ENCODE measurements at regions of chr12 and their contacts with region 1.

Region 1: GRCh38 chr12:95532851-95533250 is 18.4 kb downstream of the USP44 start:
- DNase-seq: no peak
- H3K4me3 ChIP-seq: no peak overlapping the region
- H3K27ac ChIP-seq: no peak overlapping the region
- H3K4me1 ChIP-seq: no peaks in the 10 kb centered on the region
- H3K27me3 ChIP-seq: no peaks in the 10 kb centered on the region
- CTCF ChIP-seq: no peak
- POLR2A ChIP-seq: no peak

Region 2: GRCh38 chr12:95072900-95073697 is 459.8 kb before region 1 on chr12 and contains the start of gene NR2C1:
- CTCF ChIA-PET with region 1: interaction called, 15 read pairs
- POLR2A ChIA-PET with region 1: no interaction called
- dilution Hi-C with region 1: no loop called
- intact Hi-C with region 1: no loop called
- DNase-seq: peak; percentile 91
- H3K4me3 ChIP-seq: peak within 1 kb of the TSS; percentile 72 to 88 (median 87)
- H3K27ac ChIP-seq: peak within 1 kb of the TSS; percentile 79
- H3K4me1 ChIP-seq: peaks cover 4% of the 10 kb centered on the region
- H3K27me3 ChIP-seq: no peaks in the 10 kb centered on the region
- CTCF ChIP-seq: no peak
- POLR2A ChIP-seq: peak; percentile 47
- total RNA-seq, gene NR2C1: 36.3 and 37.7 TPM in 2 replicates

Region 3: DNA sequence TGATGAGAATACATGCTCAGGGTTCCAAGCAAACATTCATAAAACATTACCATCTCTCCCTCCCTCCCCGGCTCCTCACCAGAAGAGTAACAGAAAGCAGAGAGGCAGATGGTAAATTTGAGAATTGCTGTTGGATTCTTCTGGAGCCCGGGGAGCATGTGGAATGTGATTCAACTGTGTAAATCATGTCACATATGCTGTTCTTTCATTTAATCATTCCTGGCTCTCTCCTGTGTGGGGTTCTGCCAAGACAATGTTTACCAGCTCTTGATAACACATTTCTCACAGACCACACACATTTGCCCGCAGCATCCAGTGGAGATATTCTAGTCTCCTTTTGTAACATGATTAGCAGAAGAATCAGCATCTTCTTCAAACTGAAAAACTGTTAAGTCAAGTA is 436.0 kb before region 1 on chr12:
- CTCF ChIA-PET with region 1: no interaction called
- POLR2A ChIA-PET with region 1: no interaction called
- dilution Hi-C with region 1: no loop called
- intact Hi-C with region 1: no loop called
- DNase-seq: no peak
- H3K4me3 ChIP-seq: no peak overlapping the region
- H3K27ac ChIP-seq: no peak overlapping the region
- H3K4me1 ChIP-seq: no peaks in the 10 kb centered on the region
- H3K27me3 ChIP-seq: no peaks in the 10 kb centered on the region
- CTCF ChIP-seq: no peak
- POLR2A ChIP-seq: no peak

Region 4: DNA sequence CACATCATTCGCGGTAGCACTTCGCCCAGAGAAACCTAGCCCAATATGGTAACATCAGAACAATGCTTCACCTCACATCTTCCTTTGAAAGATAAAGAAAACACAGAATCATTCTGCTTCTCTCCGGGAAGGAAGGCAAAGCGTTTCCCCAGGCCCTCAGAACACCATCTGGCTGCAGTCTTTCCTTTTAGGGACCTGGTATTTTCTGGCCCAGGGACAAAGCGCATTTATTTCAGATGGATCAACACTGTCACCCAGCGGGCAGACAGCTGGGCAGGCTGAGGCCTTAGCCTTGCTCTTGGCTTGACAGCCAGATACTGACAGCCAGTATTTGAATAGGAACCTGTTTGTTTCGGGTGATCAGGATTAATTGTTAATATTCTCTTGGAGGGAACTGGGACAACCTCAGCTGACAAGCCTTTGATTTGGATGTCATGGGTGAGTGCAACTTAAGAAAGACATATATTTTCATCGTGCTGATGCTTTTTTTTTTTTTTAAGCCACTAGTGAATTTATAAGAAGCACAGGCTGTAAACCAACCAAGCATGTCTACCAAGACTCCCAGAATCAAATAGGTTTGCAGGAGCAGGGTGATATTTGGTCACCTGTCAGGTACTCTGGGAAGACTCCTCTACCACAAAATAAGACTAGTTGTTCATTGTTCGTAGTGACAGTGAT is 196.3 kb before region 1 on chr12:
- CTCF ChIA-PET with region 1: interaction called, 26 read pairs
- POLR2A ChIA-PET with region 1: no interaction called
- dilution Hi-C with region 1: no loop called
- intact Hi-C with region 1: loop called (anchors 1 kb)
- DNase-seq: peak; percentile 91
- H3K4me3 ChIP-seq: peak overlapping the region in 1 of 3 experiments; percentile 27
- H3K27ac ChIP-seq: peak overlapping the region; percentile 50
- H3K4me1 ChIP-seq: peaks cover 11% of the 10 kb centered on the region
- H3K27me3 ChIP-seq: no peaks in the 10 kb centered on the region
- CTCF ChIP-seq: peak; percentile 93 to 98
- POLR2A ChIP-seq: no peak

Region 5: DNA sequence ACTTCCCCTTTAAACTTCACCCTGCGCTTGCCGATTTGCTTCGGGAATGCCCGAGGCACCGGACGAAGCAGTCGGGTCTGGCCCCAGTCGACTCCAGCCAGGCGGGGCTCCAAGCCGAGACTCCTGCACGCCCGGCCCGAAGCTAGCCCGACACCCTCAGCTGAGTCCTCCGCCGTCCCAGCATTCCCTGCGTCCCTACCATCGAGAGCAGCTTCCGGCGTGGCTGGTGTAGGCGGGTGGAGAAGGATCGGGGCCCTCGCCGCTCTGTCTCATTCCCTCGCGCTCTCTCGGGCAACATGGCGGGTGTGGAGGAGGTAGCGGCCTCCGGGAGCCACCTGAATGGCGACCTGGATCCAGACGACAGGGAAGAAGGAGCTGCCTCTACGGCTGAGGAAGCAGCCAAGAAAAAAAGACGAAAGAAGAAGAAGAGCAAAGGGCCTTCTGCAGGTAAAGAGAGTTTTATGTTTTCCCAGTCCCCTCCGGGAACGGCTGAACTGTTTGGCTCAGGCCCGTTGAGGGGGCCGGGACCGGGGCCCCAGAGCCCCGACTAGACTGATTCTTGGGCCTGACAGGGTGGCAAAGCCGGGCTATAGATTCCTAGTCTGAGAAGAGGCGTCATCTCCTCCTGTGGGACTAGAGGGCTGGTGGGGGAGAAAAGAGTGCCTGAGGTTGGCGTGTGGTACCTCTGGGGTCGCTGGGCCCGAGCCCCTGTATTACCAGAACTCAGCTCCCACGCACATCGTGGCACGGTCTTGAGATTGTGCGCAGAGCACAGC is 58.8 kb before region 1 on chr12 and contains the start of gene METAP2:
- CTCF ChIA-PET with region 1: interaction called, 13 read pairs
- POLR2A ChIA-PET with region 1: no interaction called
- dilution Hi-C with region 1: no loop called
- intact Hi-C with region 1: no loop called
- DNase-seq: peak; percentile 97
- H3K4me3 ChIP-seq: peak within 1 kb of the TSS; percentile 62 to 82 (median 78)
- H3K27ac ChIP-seq: peak within 1 kb of the TSS; percentile 87
- H3K4me1 ChIP-seq: peaks cover 18% of the 10 kb centered on the region
- H3K27me3 ChIP-seq: no peaks in the 10 kb centered on the region
- CTCF ChIP-seq: no peak
- POLR2A ChIP-seq: peak; percentile 85
- total RNA-seq, gene METAP2: 89.1 and 105 TPM in 2 replicates

Region 6: DNA sequence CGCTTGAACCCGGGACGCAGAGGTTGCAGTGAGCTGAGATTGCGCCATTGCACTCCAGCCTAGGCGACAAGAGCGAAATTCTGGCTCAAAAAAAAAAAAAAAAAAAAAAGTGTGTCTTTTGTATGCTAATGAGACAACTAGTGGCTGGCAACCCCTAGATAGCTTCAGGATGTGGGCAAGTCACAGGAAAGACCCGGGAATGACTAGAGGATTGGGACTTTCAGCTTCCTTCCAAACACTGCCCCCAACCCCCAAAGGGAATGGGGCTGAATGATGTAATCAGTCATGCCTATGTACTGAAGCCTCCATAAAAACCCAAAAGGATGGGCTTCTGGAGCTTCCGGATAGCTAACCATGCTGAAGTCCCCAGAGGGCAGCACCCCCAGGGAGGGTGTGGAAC is 10.2 kb before region 1 on chr12:
- CTCF ChIA-PET with region 1: interaction called, 21 read pairs
- POLR2A ChIA-PET with region 1: interaction called, 6 read pairs
- dilution Hi-C with region 1: no loop called
- intact Hi-C with region 1: no loop called
- DNase-seq: no peak
- H3K4me3 ChIP-seq: no peak overlapping the region
- H3K27ac ChIP-seq: no peak overlapping the region
- H3K4me1 ChIP-seq: no peaks in the 10 kb centered on the region
- H3K27me3 ChIP-seq: no peaks in the 10 kb centered on the region
- CTCF ChIP-seq: no peak
- POLR2A ChIP-seq: no peak

Region 7: GRCh38 chr12:95574799-95575452 is 42.1 kb after region 1 on chr12:
- CTCF ChIA-PET with region 1: interaction called, 29 read pairs
- POLR2A ChIA-PET with region 1: no interaction called
- dilution Hi-C with region 1: no loop called
- intact Hi-C with region 1: no loop called
- DNase-seq: peak; percentile 65
- H3K4me3 ChIP-seq: no peak overlapping the region
- H3K27ac ChIP-seq: no peak overlapping the region
- H3K4me1 ChIP-seq: no peaks in the 10 kb centered on the region
- H3K27me3 ChIP-seq: peaks cover 2 to 4% of the 10 kb centered on the region in 2 experiments
- CTCF ChIP-seq: peak; percentile 55 to 58
- POLR2A ChIP-seq: no peak

Region 8: GRCh38 chr12:95608252-95609033 is 75.6 kb after region 1 on chr12:
- CTCF ChIA-PET with region 1: no interaction called
- POLR2A ChIA-PET with region 1: no interaction called
- dilution Hi-C with region 1: no loop called
- intact Hi-C with region 1: no loop called
- DNase-seq: peak; percentile 91
- H3K4me3 ChIP-seq: no peak overlapping the region
- H3K27ac ChIP-seq: peak overlapping the region; percentile 91
- H3K4me1 ChIP-seq: peaks cover 74% of the 10 kb centered on the region
- H3K27me3 ChIP-seq: no peaks in the 10 kb centered on the region
- CTCF ChIP-seq: no peak
- POLR2A ChIP-seq: no peak

Measured in endothelial cell of umbilical vein (primary cell).